GM10248 (cell line): ENCODE measurements at regions of chr11 and their contacts with region 1.

Region 1: GRCh38 chr11:133072378-133072777 is 459.9 kb downstream of the OPCML start:
- DNase-seq: no peak
- CTCF ChIP-seq: no peak

Region 2: GRCh38 chr11:133011604-133012003 is 60.8 kb before region 1 on chr11:
- CTCF ChIA-PET with region 1: no interaction called
- POLR2A ChIA-PET with region 1: no interaction called
- DNase-seq: no peak
- CTCF ChIP-seq: no peak

Region 3: DNA sequence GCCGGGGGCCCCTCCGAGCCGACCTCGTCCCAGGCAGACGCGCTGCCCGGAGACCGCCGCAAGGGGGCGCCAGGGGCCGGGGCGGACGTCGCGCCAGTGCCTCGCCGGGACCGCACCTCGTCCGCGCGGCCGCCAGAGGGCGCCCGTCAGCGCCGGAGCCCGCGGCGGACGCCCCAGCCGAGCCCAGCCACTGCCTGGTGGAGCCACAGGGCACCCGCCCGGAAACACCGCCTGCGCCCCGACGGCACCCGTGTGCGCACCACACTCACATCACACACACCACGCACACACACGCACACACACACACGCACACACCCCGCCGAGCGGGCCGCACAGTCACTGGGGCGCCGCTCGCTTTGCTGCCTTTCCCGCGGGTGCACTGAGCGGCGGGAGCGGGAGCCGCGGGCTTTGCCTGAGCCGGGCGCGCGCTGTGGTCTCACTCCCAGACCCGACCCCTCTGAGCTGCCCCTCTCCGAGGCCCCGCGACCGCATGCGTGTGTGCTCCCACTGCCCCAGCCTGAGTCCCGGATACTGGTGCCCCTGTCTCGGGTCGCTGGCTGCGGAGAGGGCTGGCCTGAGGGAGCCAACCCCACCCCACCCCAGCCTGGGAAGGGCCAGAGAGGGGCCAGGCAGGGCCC is 10.6 kb after region 1 on chr11:
- CTCF ChIA-PET with region 1: interaction called, 18 read pairs
- POLR2A ChIA-PET with region 1: no interaction called
- DNase-seq: peak; percentile 88
- CTCF ChIP-seq: peak; percentile 93

Region 4: GRCh38 chr11:133249065-133249464 is 176.7 kb after region 1 on chr11:
- CTCF ChIA-PET with region 1: no interaction called
- POLR2A ChIA-PET with region 1: no interaction called
- DNase-seq: no peak
- CTCF ChIP-seq: no peak